Activated CD4-positive, alpha-beta memory T cell treated with anti-CD3 and anti-CD28 coated beads for 36 hours (primary cell): ENCODE measurements at regions of chr15 and their contacts with region 1.

Region 1: GRCh38 chr15:90482124-90483011 is 47.4 kb upstream of the CRTC3 start:
- DNase-seq: peak; percentile 62
- H3K4me3 Mint-ChIP-seq: no peak overlapping the region
- H3K27ac Mint-ChIP-seq: peak overlapping the region; percentile 9
- H3K4me1 Mint-ChIP-seq: peaks cover 30% of the 10 kb centered on the region
- H3K27me3 Mint-ChIP-seq: no peaks in the 10 kb centered on the region

Region 2: DNA sequence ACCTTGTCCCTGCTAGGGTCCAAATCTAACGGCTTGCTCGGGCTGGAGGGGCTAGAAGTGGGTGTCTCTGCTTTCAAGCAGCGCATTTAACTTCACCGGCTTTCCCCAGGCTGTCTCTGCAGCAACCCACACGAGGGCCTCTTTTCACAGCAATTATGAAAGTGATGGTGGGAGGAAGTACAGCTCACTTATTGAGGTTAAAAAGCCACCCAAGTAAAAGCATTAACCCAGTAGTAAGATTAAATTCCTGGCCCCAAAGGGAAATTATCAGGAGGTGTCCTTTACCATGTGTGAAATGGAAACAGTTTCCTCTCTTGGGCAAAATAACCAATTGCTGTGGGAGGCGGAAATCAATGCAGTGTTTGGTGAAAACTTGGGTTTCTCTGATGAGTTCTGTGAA is 175.8 kb before region 1 on chr15:
- CTCF ChIA-PET with region 1: interaction called, 15 read pairs
- POLR2A ChIA-PET with region 1: no interaction called
- intact Hi-C with region 1: no loop called
- DNase-seq: peak; percentile 64
- H3K4me3 Mint-ChIP-seq: peak overlapping the region; percentile 30
- H3K27ac Mint-ChIP-seq: peak overlapping the region; percentile 49
- H3K4me1 Mint-ChIP-seq: peaks cover 38% of the 10 kb centered on the region
- H3K27me3 Mint-ChIP-seq: no peaks in the 10 kb centered on the region

Region 3: GRCh38 chr15:90325726-90326125 is 156.6 kb before region 1 on chr15:
- CTCF ChIA-PET with region 1: interaction called, 107 read pairs
- POLR2A ChIA-PET with region 1: no interaction called
- intact Hi-C with region 1: loop called (anchors 1 kb)
- DNase-seq: no peak
- H3K4me3 Mint-ChIP-seq: no peak overlapping the region
- H3K27ac Mint-ChIP-seq: no peak overlapping the region
- H3K4me1 Mint-ChIP-seq: peaks cover 2% of the 10 kb centered on the region
- H3K27me3 Mint-ChIP-seq: no peaks in the 10 kb centered on the region

Region 4: GRCh38 chr15:90352109-90352893 is 130.1 kb before region 1 on chr15 and contains the start of gene ZNF774:
- CTCF ChIA-PET with region 1: interaction called, 13 read pairs
- POLR2A ChIA-PET with region 1: no interaction called
- intact Hi-C with region 1: no loop called
- DNase-seq: peak; percentile 93
- H3K4me3 Mint-ChIP-seq: peak within 1 kb of the TSS; percentile 87
- H3K27ac Mint-ChIP-seq: no peak within 1 kb of the TSS
- H3K4me1 Mint-ChIP-seq: peaks cover 6% of the 10 kb centered on the region
- H3K27me3 Mint-ChIP-seq: peaks cover 4% of the 10 kb centered on the region
- total RNA-seq, gene ZNF774: 0.68 to 1.1 TPM

Region 5: GRCh38 chr15:90432253-90432652 is 50.1 kb before region 1 on chr15:
- CTCF ChIA-PET with region 1: no interaction called
- POLR2A ChIA-PET with region 1: no interaction called
- intact Hi-C with region 1: no loop called
- DNase-seq: no peak
- H3K4me3 Mint-ChIP-seq: no peak overlapping the region
- H3K27ac Mint-ChIP-seq: no peak overlapping the region
- H3K4me1 Mint-ChIP-seq: peaks cover 11% of the 10 kb centered on the region
- H3K27me3 Mint-ChIP-seq: no peaks in the 10 kb centered on the region

Region 6: DNA sequence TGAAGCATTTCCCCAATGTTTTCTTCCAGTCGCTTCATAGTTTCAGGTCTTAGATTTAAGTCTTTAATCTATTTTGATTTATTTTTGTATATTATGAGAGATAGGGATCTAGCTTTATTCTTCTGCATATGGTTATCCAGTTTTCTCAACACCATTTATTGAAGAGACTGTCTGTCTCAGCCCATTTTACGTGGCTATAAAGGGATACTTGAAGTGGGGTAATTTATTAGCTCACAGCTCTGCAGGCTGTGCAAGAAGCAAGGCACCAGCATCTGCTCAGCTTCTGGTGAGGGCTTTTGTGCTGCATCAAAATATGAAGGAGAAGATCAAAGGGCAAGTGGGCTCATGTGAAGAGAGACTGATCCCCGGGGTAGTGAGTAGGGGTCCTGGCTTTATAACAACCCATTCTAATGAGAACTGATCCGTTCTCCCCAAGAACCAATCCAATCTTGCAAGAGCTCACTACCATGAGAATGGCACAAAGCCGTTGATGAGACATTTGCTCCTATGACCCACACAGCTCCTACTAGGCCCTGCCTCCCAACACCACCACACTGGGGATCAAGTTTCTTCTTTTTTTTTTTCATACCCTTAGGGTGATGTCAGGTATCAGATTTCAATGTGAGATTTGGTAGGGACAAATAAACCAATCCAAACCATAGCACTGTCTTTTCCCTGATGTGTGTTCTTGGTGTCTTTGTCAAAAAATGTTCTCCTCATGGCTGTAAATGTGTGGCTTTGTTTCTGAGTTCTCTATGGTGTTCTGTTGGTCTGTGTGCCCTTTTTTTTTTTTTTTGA is 31.1 kb before region 1 on chr15:
- CTCF ChIA-PET with region 1: interaction called, 11 read pairs
- POLR2A ChIA-PET with region 1: no interaction called
- intact Hi-C with region 1: no loop called
- DNase-seq: no peak
- H3K4me3 Mint-ChIP-seq: no peak overlapping the region
- H3K27ac Mint-ChIP-seq: no peak overlapping the region
- H3K4me1 Mint-ChIP-seq: no peaks in the 10 kb centered on the region
- H3K27me3 Mint-ChIP-seq: no peaks in the 10 kb centered on the region

Region 7: DNA sequence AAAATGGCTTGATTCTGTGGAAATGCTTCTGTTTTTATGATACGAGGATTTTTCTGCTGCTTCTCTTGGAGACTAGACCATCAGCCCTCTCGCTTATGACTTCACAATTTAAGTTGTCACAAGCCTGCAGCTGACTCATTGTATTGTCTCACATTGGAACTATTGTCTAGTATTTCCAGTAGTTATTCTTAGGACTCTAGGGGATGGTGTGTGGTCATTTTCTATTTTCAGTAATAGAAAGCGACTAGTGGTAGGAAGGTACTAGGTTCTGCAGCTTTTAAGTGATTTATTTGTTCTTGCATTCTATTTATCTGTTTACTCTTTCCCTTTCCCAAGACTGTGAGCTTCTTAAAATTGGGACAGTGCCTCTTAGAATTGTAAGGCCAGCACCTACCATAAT is 19.0 kb before region 1 on chr15:
- CTCF ChIA-PET with region 1: interaction called, 27 read pairs
- POLR2A ChIA-PET with region 1: no interaction called
- intact Hi-C with region 1: no loop called
- DNase-seq: no peak
- H3K4me3 Mint-ChIP-seq: no peak overlapping the region
- H3K27ac Mint-ChIP-seq: no peak overlapping the region
- H3K4me1 Mint-ChIP-seq: peaks cover 26% of the 10 kb centered on the region
- H3K27me3 Mint-ChIP-seq: no peaks in the 10 kb centered on the region